A549 (cell line): ENCODE measurements at regions of chr14 and their contacts with region 1.

Region 1: DNA sequence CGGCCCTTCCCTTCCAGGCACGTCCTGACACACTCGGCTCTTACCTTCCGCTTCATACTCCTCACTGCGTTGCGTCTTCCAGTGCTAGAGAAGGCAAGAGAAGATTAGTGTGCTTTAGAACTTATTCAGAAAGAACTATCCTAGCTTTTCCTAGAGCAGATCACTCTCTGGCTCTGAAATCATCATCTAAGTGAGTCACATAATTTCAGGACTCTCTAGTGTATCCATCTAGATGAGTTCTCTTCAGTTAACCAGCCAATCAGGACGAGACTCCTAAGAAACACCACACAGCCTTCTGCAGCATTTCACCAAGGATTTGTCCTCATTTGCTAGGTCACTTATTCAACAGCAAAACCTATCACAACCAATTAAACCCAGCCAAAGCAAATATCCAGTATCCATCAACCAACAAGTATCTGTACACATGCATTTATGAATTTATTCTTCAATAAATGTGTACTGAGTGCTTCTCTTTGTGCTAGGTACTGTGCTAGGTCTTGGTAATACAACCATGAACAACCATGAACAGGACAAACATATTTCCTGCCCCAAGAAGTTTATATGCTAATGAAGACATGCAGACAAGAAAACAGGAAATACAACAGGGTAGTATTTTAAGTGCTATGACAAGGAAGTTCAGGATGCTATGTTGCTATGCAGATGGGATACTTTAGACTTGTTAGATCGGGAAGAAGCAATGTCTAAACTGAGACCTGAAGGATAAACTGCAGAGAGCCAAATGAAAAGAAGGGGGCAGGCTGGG is 52.1 kb downstream of the NIN start:
- DNase-seq: no peak
- ATAC-seq: no peak
- H3K4me3 ChIP-seq: no peak overlapping the region
- H3K27ac ChIP-seq: no peak overlapping the region
- H3K4me1 ChIP-seq: peaks cover 5% of the 10 kb centered on the region; the same call in 1 of the 3 replicates
- CTCF ChIP-seq: no peak
- EP300 ChIP-seq: no peak
- POLR2A ChIP-seq: no peak
- RAD21 ChIP-seq: no peak

Region 2: GRCh38 chr14:50550286-50550685 is 228.6 kb before region 1 on chr14:
- CTCF ChIA-PET with region 1: interaction called, 15 read pairs
- POLR2A ChIA-PET with region 1: no interaction called
- DNase-seq: no peak
- ATAC-seq: no peak
- H3K4me3 ChIP-seq: no peak overlapping the region
- H3K27ac ChIP-seq: no peak overlapping the region
- H3K4me1 ChIP-seq: no peaks in the 10 kb centered on the region
- CTCF ChIP-seq: no peak
- EP300 ChIP-seq: no peak
- POLR2A ChIP-seq: no peak
- RAD21 ChIP-seq: no peak

Region 3: DNA sequence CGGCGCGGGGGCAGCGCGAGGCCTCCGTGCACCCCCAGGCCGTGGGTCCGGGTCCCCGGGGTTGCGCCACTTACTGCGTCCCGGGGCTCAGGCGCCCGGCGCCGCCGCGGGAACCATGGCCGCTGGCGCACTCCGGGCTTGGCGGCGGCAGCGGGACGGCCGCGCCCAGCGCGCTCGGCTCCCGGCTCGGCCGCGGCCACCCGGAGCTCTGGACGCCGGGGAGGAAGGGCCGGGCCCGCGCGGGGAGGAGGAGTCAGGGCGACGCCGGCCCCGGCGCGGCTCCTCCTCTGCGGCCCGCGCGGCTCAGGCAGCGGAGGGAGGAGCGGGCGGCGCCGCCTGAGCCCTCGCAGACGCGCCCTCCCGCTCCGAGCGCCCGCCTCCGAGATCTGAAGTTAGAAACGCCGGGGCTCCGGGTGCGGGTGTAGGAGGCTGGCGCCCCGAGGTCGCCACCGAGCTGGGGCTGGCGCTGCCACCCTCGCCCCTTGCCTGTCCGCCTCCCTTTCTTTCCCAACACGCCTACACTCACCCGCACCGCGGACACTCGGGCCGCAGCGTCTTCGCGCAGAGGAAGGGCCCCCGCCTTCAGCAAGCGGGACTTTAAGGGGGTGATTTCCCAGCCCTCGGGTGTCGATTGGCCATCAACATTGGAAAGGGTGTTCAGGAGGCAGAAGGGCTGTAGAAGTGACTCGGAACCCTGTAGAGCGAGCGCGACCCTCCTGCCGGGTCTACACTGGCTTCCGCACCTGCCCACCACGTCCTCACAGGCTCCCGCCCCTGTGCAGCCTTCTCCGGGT is 52.2 kb after region 1 on chr14 and contains the start of gene NIN:
- CTCF ChIA-PET with region 1: interaction called, 11 read pairs
- POLR2A ChIA-PET with region 1: no interaction called
- DNase-seq: peak; percentile 43 to 72
- ATAC-seq: peak; percentile 96 to 98
- H3K4me3 ChIP-seq: peak within 1 kb of the TSS; percentile 98
- H3K27ac ChIP-seq: peak within 1 kb of the TSS; percentile 95 to 99
- H3K4me1 ChIP-seq: peaks cover 16% of the 10 kb centered on the region; the same call in 2 of the 3 replicates
- CTCF ChIP-seq: no peak
- EP300 ChIP-seq: no peak
- POLR2A ChIP-seq: peak; percentile 64
- RAD21 ChIP-seq: no peak
- polyA plus RNA-seq, gene NIN: 19.5 and 20.5 TPM in 2 replicates

Region 4: GRCh38 chr14:50846226-50846880 is 67.5 kb after region 1 on chr14:
- CTCF ChIA-PET with region 1: no interaction called
- POLR2A ChIA-PET with region 1: no interaction called
- DNase-seq: peak in 1 of 2 experiments; percentile 15
- ATAC-seq: peak; percentile 70 to 89; a peak in 5 of 6 replicates
- H3K4me3 ChIP-seq: no peak overlapping the region
- H3K27ac ChIP-seq: peak overlapping the region in 1 of 2 experiments; percentile 2; a peak in 1 of 6 replicates
- H3K4me1 ChIP-seq: peaks cover 11% of the 10 kb centered on the region; the same call in 2 of the 3 replicates
- CTCF ChIP-seq: no peak
- EP300 ChIP-seq: no peak
- POLR2A ChIP-seq: no peak
- RAD21 ChIP-seq: no peak

Region 5: DNA sequence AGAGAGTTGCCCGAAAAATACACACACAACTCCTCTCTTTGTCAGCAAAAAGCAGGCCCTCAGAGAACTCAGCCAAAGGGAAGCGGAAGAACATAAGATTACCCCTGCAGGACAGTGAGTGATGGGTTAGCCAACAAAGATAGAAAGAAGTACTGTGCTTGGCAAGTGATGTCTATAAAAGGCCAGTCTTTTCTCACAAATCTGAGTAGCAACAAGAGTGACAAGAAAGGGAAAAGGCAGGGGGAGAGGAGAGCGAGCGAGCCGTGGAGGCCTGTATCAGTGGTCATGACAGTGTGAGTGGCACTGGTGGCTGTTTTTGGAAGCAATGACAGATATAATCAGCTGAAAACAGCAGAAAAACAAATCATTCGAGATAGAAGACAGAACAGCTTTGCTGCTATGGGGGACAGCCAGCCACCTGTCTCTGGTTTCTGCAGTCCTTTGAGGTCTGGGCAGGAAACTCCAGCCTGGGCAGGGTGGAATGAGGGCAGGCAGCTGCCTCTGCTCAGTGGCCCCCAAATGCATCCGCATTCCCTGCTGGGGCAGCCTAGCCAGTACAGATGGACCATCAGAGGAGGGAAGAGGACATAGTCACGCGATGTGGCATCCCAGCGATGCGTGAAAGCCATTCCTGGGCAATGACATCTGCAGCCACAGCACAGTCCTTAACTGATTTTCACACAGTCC is 241.3 kb after region 1 on chr14:
- CTCF ChIA-PET with region 1: no interaction called
- POLR2A ChIA-PET with region 1: no interaction called
- DNase-seq: no peak
- ATAC-seq: no peak
- H3K4me3 ChIP-seq: no peak overlapping the region
- H3K27ac ChIP-seq: no peak overlapping the region
- H3K4me1 ChIP-seq: no peaks in the 10 kb centered on the region
- CTCF ChIP-seq: no peak
- EP300 ChIP-seq: no peak
- POLR2A ChIP-seq: no peak
- RAD21 ChIP-seq: no peak

Region 6: DNA sequence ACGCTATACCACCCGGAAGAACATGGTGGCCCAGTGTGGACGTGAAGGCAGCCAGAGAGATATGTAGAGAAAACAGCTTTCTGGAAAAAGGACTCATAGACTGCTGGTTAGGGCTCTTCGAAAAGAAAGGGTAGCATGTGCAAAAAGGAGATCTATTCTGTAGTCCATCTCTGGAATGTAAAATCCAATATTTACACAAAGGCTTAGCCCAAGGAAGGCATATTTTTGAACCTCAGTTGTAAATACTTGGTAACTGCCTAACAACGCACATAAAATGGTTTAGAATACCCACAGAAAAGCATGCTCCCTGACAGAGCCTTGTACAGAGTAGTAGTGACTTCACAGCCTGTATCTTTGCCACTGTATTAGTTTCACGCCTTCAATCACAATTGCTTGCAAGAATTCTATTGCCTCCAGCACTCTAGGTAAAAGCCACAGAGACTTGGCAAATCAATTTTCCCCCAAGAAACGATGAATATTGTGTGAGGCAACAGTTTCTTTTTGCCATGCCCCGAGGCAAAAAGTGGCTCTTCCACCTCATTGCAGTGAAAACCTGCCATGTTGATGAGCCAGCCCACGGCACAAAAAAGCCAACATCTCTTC is 256.8 kb after region 1 on chr14:
- CTCF ChIA-PET with region 1: no interaction called
- POLR2A ChIA-PET with region 1: no interaction called
- DNase-seq: peak in 1 of 2 experiments; percentile 46
- ATAC-seq: peak in 1 of 2 experiments; percentile 87; a peak in 3 of 6 replicates
- H3K4me3 ChIP-seq: no peak overlapping the region
- H3K27ac ChIP-seq: peak overlapping the region in 1 of 2 experiments; percentile 39; a peak in 2 of 6 replicates
- H3K4me1 ChIP-seq: peaks cover 12% of the 10 kb centered on the region
- CTCF ChIP-seq: no peak
- EP300 ChIP-seq: no peak
- POLR2A ChIP-seq: no peak
- RAD21 ChIP-seq: no peak